Activated B cell treated with CpG ODN at 0.5 μM for 24 hours (primary cell): ENCODE measurements at regions of chr19 and their contacts with region 1.

Region 1: GRCh38 chr19:12716861-12717260 is 6.9 kb downstream of the TNPO2 start:
- DNase-seq: no peak
- ATAC-seq: peak; percentile 75
- H3K4me3 Mint-ChIP-seq: no peak overlapping the region
- H3K27ac Mint-ChIP-seq: no peak overlapping the region
- H3K4me1 Mint-ChIP-seq: peaks cover 24% of the 10 kb centered on the region
- H3K27me3 Mint-ChIP-seq: no peaks in the 10 kb centered on the region
- CTCF ChIP-seq: no peak

Region 2: GRCh38 chr19:11921852-11922495 is 794.9 kb before region 1 on chr19:
- CTCF ChIA-PET with region 1: no interaction called
- POLR2A ChIA-PET with region 1: no interaction called
- intact Hi-C with region 1: no loop called
- DNase-seq: no peak
- ATAC-seq: no peak
- H3K4me3 Mint-ChIP-seq: no peak overlapping the region
- H3K27ac Mint-ChIP-seq: no peak overlapping the region
- H3K4me1 Mint-ChIP-seq: peaks cover 33% of the 10 kb centered on the region
- H3K27me3 Mint-ChIP-seq: no peaks in the 10 kb centered on the region
- CTCF ChIP-seq: no peak

Region 3: DNA sequence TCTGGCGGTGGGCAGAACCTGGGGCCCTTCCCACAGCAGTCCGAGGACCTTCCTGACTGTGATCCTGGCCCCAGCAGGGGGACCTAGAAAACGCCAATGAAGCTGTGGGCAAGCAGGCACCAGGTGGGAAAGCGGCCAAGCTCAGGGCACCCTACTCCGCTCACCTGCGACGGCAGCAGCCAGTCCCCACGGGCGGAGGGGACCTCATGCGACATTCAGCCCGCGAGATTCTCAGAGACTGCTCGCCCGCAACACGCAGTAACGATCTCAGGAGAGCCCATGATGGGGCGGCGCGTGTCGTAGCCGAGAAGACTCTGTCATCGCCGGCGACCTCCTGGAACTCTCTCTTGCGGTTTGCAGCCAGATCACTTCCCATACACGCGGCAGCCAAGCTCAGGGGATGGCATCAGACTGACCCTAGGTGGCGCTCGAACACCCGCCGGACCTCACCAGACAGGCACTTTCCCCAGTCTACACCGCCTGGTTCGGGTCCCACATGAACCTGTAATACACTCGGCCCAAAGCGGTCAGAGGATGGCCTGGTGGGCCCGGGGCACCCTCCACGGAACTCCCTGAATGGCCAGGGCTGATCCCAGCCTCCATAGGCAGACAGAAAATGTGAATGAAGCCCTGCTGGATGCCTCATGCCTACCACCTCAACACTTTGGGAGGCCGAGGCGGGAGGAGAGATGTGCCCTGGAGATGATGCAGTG is 76.8 kb before region 1 on chr19:
- CTCF ChIA-PET with region 1: no interaction called
- POLR2A ChIA-PET with region 1: no interaction called
- intact Hi-C with region 1: no loop called
- DNase-seq: peak; percentile 75
- ATAC-seq: peak; percentile 95
- H3K4me3 Mint-ChIP-seq: peak overlapping the region; percentile 79
- H3K27ac Mint-ChIP-seq: peak overlapping the region; percentile 46
- H3K4me1 Mint-ChIP-seq: peaks cover 23% of the 10 kb centered on the region
- H3K27me3 Mint-ChIP-seq: no peaks in the 10 kb centered on the region
- CTCF ChIP-seq: no peak

Region 4: DNA sequence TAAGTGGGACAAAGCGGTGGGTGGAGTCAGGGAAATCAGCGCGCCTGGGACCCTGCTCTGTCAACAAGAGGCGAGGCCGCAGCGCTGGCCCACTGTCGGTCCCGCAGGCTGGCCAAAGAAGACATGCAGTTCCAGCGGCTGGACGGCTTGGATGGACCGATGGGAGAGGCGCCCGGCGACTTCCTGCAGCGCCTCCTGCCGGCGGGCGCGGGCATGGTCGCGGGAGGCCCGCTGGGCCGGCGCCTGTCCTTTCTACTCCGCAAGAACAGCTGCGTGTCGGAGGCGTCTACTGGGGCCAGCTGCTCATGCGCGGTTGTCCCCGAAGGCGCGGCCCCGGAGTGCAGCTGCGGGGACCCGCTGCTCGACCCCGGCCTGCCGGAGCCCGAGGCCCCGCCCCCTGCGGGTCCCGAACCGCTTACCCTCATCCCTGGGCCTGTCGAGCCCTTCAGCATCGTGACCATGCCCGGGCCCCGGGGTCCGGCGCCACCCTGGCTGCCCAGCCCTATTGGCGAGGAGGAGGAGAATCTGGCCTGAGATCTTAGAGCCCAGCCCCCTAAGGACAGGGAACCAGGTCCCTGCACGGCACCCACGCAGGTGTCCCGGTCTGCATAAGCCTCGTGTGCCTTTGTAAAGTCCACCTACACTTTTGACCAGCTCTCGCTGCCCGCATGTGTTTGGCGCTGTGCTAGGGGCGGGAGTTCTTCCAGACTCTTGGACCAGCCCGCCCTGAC is 40.8 kb after region 1 on chr19:
- CTCF ChIA-PET with region 1: interaction called, 14 read pairs
- POLR2A ChIA-PET with region 1: interaction called, 4 read pairs
- intact Hi-C with region 1: loop called (anchors 1 kb)
- DNase-seq: peak; percentile 69
- ATAC-seq: peak; percentile 75
- H3K4me3 Mint-ChIP-seq: no peak overlapping the region
- H3K27ac Mint-ChIP-seq: no peak overlapping the region
- H3K4me1 Mint-ChIP-seq: peaks cover 10% of the 10 kb centered on the region
- H3K27me3 Mint-ChIP-seq: peaks cover 22% of the 10 kb centered on the region
- CTCF ChIP-seq: peak; percentile 70